Cardiac septum (tissue), 1 donor: ENCODE measurements at regions of chr5 and their contacts with region 1.

Region 1: GRCh38 chr5:176543428-176544173 is 5.5 kb upstream of the CDHR2 start:
- DNase-seq: peak; percentile 87

Region 2: DNA sequence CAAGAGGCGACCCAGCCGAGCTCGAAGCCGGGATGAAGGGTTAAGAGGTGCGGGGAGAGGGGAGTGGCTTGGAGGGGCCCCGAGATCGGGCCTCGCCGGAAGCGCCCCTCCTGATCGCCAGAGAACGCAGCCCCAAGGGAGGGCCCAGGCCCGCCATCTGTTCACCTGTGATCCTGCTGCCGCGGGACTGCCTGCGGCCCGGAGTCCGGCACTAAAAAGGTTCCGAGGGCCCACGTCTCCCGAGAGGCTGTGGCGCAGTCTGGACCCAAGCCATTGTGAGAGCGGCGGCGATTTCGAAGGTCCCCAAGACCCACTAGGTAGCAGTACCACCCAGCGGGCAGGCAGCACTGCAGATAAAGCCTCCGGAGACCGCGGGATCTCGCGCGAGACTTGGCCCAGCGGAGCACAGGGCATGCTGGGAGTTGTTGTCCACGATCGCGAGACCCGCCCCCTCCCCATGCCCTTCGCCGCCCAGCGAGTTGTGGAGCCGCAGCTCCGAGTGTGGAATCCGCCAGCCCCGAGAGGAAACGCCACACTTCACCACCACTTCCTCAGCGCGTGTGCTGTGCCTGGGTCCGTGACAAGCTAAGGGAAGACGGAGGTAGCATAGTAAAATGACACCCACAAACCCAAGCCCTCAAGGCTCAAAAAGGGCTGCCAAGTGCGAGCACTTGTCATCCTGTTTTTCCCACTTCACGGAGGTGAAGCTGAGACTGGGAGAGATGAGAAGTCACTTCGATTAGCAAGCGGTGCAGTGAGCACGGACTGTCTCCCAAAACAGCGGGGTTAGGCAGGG is 182.0 kb before region 1 on chr5 and contains the start of gene KIAA1191:
- intact Hi-C with region 1: loop called (anchors 5 kb)
- DNase-seq: peak; percentile 98
- total RNA-seq, gene KIAA1191: 104 TPM

Region 3: DNA sequence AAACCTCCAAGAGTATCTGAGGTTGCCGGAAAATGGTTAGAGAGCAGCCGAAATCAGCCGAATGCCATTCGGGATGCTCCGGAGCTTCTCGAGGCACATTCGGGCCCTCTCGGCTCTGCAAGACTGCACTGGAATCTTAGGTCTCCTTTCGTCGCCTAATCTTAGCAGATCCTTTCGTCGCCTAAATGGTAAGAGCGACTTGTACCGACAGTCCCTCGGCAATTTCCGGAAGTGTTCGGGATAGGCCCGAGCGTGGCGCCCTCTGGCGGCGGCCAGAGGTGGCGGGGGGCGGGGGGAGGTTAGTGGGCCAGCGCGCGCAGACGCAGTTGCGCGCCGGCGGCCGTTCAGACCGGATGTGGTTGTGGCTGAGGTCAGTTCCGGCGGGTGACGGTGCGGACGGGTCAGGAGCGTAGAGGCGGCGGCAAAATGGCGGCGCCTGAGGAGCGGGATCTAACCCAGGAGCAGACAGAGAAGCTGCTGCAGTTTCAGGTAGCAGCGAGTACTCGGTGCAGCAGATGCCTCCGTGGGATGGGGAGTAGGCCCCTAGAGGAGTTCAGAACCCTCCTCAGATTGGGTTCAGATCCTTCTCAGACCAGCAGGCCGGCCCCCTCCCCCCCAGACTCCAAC is 95.5 kb before region 1 on chr5 and contains the start of gene FAF2:
- intact Hi-C with region 1: loop called (anchors 2 kb)
- DNase-seq: peak; percentile 99
- total RNA-seq, gene FAF2: 15.9 TPM

Region 4: GRCh38 chr5:176597417-176598389 is 54.1 kb after region 1 on chr5:
- intact Hi-C with region 1: no loop called
- DNase-seq: no peak

Region 5: GRCh38 chr5:176647030-176647866 is 103.6 kb after region 1 on chr5 and contains the start of gene TSPAN17:
- intact Hi-C with region 1: loop called (anchors 5 kb)
- DNase-seq: peak; percentile 100
- total RNA-seq, gene TSPAN17: 30.2 TPM